GM12878 (cell line): ENCODE measurements at regions of chr4 and their contacts with region 1.

Region 1: DNA sequence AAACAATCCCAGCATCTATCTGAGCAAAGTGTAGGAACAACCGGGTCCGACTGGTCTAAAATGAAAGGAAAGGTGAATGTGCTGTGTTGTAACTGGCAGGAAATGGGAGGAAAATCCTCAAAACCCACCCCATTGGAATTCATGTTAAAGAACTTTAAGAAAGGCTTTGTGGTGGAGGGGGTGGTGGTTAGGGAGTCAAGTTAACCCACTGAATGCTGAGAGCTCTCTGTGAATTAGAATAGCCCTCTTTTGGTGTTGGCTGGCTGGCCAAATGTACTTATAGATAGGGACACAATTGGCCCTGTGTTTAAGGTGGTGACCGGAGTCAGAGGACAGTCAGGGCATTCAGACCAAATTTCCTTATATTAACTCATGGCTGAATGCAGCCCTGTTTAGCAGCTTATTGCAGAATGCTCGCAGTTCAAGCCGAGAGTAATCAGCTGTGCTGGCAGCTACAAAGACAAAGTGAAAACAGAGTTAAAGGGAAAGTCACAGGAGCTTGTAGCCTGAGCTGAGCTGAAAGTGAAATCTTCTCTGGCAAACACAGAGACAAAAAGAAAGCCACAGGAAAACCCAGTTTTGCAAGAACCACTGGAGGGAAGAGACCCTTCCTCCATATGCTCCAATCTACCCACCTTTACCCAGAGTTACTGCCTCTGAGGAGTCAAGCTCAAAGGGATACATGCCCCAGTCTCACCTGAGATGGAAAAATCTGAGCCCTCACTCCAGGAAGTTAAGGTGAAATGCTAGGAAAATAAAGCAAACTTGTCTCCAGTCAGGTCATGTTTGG is 38.5 kb upstream of the UGT2B7 start:
- DNase-seq: no peak
- ATAC-seq: peak; percentile 79
- H3K4me3 ChIP-seq: peak overlapping the region; percentile 24; the same call in 1 of the 2 replicates
- H3K27ac ChIP-seq: peak overlapping the region; percentile 61
- H3K4me1 ChIP-seq: peaks cover 4% of the 10 kb centered on the region; the same call in 1 of the 2 replicates
- H3K27me3 ChIP-seq: no peaks in the 10 kb centered on the region
- CTCF ChIP-seq: no peak
- EP300 ChIP-seq: no peak
- POLR2A ChIP-seq: no peak
- RAD21 ChIP-seq: no peak

Region 2: DNA sequence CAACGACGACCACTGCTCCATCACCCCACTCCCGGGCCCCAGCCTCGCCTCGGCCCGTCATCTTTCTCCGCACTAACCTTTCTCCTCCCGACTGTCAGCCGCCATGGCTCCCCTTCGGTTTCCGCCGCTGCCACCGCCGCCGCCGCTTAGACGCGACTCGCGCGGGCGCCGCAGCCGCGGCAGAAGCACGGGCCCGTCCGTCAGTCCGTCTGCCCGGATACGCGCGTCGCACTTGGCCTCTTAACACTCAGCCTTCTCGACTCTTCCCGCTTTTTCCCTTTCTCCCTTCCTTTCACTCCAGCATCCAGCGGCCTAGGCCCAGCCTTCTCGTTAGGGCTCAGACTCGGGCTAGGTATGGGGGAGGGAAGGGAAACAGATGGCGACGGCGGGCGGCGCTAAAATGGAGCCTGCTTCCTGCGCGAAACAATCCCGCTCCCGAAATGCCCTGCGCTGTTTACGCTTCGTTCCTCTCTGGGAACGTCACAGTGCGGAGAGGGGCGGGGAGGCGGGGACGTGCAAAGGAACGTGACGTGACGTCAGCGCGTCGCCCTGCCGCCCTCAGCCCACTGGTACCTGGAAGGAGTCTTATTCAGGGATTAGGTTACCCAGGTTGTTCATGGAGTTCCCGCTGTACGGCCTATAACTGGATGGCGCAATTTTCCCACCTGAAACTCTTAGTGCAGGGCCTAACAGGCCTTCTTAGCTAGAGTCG is 708.0 kb before region 1 on chr4 and contains the start of gene YTHDC1:
- CTCF ChIA-PET with region 1: no interaction called
- POLR2A ChIA-PET with region 1: no interaction called
- RAD21 ChIA-PET with region 1: no interaction called
- SMC1A ChIA-PET with region 1: no interaction called
- in situ Hi-C with region 1: no loop called
- intact Hi-C with region 1: loop called (anchors 5 kb)
- DNase-seq: peak; percentile 81
- ATAC-seq: peak; percentile 93
- H3K4me3 ChIP-seq: peak within 1 kb of the TSS; percentile 84
- H3K27ac ChIP-seq: peak within 1 kb of the TSS; percentile 97
- H3K4me1 ChIP-seq: no peaks in the 10 kb centered on the region
- H3K27me3 ChIP-seq: no peaks in the 10 kb centered on the region
- CTCF ChIP-seq: no peak
- EP300 ChIP-seq: peak in 1 of 2 experiments; percentile 53; a peak in 2 of 4 replicates
- POLR2A ChIP-seq: peak; percentile 99
- RAD21 ChIP-seq: no peak
- polyA plus RNA-seq, gene YTHDC1: 18.7 to 22.7 TPM

Region 3: DNA sequence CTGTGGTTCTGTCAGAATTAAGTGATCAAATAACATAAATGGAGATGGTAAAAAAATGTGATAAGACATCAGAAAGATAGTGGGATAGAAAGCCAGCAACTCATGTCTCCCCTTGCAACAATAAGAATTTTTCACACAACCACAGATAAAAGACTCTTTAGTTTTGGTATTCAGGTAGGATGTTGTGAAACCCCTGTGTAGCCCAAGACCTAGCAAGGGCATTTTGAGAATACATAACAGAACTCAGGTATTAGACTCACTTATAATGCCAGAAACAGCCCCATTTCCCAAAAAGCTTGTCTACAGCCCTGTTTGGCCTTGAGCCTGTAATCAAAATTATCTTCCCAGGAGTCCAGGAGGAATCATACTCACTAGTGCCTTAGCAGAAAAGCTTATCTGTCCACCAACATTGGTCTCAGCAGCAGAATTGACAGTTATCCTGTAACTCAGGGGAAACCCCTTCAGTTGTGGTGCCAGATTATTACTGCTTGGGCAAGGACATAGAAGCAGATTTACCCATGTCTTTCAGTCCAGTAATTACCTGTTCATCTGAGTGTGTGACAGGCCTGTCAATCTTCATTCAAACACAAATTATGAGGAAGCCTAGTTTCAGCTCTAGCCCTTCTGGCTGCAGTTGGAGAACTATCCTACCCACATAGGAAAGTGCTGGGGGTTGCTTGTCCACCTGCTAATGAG is 440.7 kb before region 1 on chr4:
- CTCF ChIA-PET with region 1: no interaction called
- POLR2A ChIA-PET with region 1: no interaction called
- RAD21 ChIA-PET with region 1: no interaction called
- SMC1A ChIA-PET with region 1: no interaction called
- in situ Hi-C with region 1: no loop called
- intact Hi-C with region 1: loop called (anchors 10 kb)
- DNase-seq: no peak
- ATAC-seq: no peak
- H3K4me3 ChIP-seq: no peak overlapping the region
- H3K27ac ChIP-seq: no peak overlapping the region
- H3K4me1 ChIP-seq: no peaks in the 10 kb centered on the region
- H3K27me3 ChIP-seq: no peaks in the 10 kb centered on the region
- CTCF ChIP-seq: no peak
- EP300 ChIP-seq: no peak
- POLR2A ChIP-seq: no peak
- RAD21 ChIP-seq: no peak

Region 4: DNA sequence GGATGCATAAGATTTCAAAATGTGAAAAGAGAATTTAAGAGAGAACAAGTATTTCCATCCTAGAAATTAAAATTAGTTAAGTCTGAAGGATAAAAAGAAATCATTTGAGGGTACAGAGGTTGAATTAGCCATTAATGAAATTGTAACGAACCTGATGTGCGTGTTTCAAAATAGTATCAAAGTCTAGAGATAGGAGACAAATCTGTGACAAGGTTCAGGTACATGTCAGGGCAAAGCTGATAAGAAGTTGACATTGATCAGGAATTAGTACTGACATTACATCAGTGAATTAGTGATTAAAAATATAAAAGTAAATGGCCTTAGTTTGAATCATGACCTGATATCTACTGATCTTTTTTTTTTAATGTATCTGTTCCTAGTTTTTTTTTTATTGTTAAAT is 179.8 kb before region 1 on chr4:
- CTCF ChIA-PET with region 1: no interaction called
- POLR2A ChIA-PET with region 1: no interaction called
- RAD21 ChIA-PET with region 1: no interaction called
- SMC1A ChIA-PET with region 1: no interaction called
- in situ Hi-C with region 1: no loop called
- intact Hi-C with region 1: no loop called
- DNase-seq: no peak
- ATAC-seq: no peak
- H3K4me3 ChIP-seq: no peak overlapping the region
- H3K27ac ChIP-seq: no peak overlapping the region
- H3K4me1 ChIP-seq: no peaks in the 10 kb centered on the region
- H3K27me3 ChIP-seq: no peaks in the 10 kb centered on the region
- CTCF ChIP-seq: no peak
- EP300 ChIP-seq: no peak
- POLR2A ChIP-seq: no peak
- RAD21 ChIP-seq: no peak

Region 5: DNA sequence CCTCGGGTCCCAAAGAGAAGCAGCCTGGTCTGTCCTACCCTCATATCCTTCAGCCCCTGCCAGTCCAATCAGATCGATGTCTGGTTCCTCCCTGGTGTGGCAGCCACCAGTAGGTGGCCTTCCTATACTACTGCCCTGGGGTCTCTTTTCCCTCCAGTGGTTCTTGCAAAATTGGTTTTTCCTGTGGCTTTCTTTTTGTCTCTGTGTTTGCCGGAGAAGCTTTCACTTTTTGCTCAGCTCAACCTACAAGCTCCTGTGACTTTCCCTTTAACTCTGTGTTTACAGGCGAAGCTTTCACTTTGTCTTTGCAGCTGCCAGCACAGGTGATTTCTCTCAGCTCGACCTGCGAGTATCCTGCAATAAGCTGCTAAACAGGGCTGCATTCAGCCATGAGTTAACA is 153.0 kb before region 1 on chr4:
- CTCF ChIA-PET with region 1: interaction called, 15 read pairs
- POLR2A ChIA-PET with region 1: interaction called, 7 read pairs
- RAD21 ChIA-PET with region 1: interaction called, 29 read pairs
- SMC1A ChIA-PET with region 1: interaction called, 40 read pairs
- in situ Hi-C with region 1: no loop called
- intact Hi-C with region 1: loop called (anchors 2 kb)
- DNase-seq: peak; percentile 21
- ATAC-seq: peak; percentile 83
- H3K4me3 ChIP-seq: no peak overlapping the region
- H3K27ac ChIP-seq: no peak overlapping the region
- H3K4me1 ChIP-seq: no peaks in the 10 kb centered on the region
- H3K27me3 ChIP-seq: no peaks in the 10 kb centered on the region
- CTCF ChIP-seq: peak; percentile 26 to 36 (median 35); a peak in 3 of 6 replicates
- EP300 ChIP-seq: no peak
- POLR2A ChIP-seq: no peak
- RAD21 ChIP-seq: peak; percentile 48

Region 6: DNA sequence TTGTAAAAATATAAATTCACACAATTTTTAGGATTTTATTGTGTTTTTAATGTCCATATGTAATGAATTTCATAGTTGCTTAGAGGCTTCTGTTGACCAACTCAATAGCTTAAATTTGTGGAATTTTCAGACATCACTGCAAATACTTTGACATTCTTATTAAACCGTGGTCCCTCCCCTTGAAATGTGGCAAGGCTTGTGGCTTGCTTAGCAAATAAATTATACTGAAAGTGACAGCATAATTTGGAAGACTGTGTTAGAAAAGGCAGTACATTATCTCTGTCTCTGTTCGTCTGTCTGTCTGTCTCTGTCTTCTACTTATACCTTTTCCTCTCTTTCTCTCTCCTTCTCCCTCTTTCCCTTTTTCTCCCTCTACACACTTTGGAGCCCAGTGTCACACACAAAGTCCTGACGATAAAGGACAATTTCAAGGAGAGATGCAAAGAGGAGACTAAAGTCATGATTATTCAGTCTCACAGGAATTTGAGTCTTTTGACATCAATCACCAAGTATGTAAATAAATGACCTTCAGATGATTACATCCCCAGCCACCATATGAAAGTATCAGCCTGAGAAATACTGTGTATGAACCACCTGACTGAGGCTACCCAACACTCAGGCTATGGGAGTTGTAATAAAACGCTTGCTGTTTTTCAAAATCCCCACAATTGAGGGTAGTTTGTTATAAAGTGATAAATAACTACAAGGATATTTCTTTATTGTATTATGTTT is 17.4 kb after region 1 on chr4:
- CTCF ChIA-PET with region 1: interaction called, 6 read pairs
- POLR2A ChIA-PET with region 1: interaction called, 4 read pairs
- RAD21 ChIA-PET with region 1: interaction called, 6 read pairs
- SMC1A ChIA-PET with region 1: interaction called, 14 read pairs
- in situ Hi-C with region 1: no loop called
- intact Hi-C with region 1: no loop called
- DNase-seq: no peak
- ATAC-seq: peak; percentile 57
- H3K4me3 ChIP-seq: no peak overlapping the region
- H3K27ac ChIP-seq: no peak overlapping the region
- H3K4me1 ChIP-seq: no peaks in the 10 kb centered on the region
- H3K27me3 ChIP-seq: no peaks in the 10 kb centered on the region
- CTCF ChIP-seq: no peak
- EP300 ChIP-seq: no peak
- POLR2A ChIP-seq: no peak
- RAD21 ChIP-seq: no peak

Region 7: GRCh38 chr4:69167300-69167699 is 109.5 kb after region 1 on chr4:
- CTCF ChIA-PET with region 1: interaction called, 24 read pairs
- POLR2A ChIA-PET with region 1: no interaction called
- RAD21 ChIA-PET with region 1: interaction called, 11 read pairs
- SMC1A ChIA-PET with region 1: interaction called, 7 read pairs
- in situ Hi-C with region 1: no loop called
- intact Hi-C with region 1: loop called (anchors 1 kb)
- DNase-seq: no peak
- ATAC-seq: no peak
- H3K4me3 ChIP-seq: no peak overlapping the region
- H3K27ac ChIP-seq: no peak overlapping the region
- H3K4me1 ChIP-seq: no peaks in the 10 kb centered on the region
- H3K27me3 ChIP-seq: no peaks in the 10 kb centered on the region
- CTCF ChIP-seq: no peak
- EP300 ChIP-seq: no peak
- POLR2A ChIP-seq: no peak
- RAD21 ChIP-seq: no peak